Cardiac septum (tissue), 1 donor: ENCODE measurements at regions of chr13 and their contacts with region 1.

Region 1: DNA sequence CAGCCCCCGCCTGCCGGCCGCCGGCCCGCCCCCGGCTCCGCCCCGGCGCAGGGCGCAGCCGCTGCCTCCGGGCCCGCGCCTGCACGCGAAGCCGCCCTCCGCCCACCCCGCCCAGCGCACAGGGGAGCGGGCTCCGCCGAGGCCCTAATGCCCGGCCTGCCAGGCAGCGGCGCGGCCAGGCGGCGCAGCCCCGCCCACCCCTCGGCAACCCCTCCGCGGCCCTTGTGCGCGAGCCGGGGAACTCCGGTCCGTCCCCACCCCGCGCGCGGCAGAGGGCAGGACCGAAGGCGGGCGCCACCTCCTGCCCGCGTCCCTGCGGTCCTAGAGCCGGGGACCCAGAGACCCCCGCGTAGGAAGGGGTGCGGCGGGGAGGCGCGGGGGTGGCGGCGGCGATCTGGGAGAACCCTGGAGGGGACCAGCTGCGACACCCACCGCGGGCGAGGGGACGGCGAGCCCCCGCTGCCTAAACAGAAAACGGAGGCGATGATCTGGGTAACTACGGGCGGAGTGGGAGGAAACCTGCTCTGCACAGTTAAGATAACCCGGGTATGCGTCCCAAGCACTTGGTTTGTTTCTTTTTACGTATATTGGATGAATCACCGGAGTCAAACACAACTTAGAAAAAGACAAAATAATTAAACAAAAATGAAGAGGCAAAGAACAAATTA is 350 bp upstream of the USP12 start:
- DNase-seq: peak; percentile 94

Region 2: DNA sequence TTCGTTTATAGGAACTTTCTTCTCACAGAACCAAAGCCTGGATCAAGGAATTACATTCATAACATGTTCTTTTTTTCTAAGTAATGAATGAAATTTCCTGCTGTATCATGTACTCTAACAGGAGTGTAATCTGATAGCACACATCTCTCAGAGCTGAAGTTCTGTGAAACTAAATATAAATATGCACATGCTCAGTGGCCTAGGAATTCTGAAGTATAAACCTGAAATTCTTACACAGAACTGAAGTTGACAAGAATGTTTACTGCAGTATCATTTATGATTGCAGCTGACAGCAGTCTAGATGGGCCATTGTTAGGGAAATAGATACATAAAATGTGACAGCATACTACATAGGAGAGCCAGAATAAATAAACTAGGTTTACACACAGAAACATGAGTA is 54.8 kb before region 1 on chr13:
- intact Hi-C with region 1: loop called (anchors 10 kb)
- DNase-seq: no peak

Region 3: DNA sequence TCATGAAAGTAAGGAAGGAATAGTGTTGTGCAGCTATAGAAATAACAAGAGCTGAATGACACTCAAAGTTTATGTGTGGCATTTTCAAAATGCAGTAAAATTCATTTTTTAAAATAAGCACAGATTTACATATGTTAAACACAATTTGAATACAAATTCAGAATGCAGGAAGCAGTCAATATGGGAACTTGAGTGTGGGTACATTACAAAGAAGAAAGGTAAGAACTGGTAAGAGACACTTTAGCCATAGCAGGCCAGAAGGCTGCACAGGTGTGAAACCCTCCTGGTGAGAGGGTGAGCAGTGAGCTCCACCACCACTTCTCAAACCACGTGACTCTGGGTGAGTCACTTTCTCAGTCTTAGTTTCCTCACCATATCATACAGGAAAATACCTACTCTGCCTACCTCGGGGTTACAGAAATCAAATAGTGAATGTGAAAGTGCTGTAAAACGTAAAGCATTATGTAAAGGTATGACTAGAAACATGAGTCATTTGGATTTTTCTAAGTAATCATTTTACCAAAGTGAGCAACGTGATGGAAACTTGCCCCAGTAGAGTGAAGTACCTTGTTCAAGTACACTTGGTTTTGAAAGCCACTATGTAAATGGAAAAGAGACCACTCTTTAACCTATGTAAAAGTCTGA is 40.9 kb before region 1 on chr13:
- intact Hi-C with region 1: no loop called
- DNase-seq: no peak

Region 4: DNA sequence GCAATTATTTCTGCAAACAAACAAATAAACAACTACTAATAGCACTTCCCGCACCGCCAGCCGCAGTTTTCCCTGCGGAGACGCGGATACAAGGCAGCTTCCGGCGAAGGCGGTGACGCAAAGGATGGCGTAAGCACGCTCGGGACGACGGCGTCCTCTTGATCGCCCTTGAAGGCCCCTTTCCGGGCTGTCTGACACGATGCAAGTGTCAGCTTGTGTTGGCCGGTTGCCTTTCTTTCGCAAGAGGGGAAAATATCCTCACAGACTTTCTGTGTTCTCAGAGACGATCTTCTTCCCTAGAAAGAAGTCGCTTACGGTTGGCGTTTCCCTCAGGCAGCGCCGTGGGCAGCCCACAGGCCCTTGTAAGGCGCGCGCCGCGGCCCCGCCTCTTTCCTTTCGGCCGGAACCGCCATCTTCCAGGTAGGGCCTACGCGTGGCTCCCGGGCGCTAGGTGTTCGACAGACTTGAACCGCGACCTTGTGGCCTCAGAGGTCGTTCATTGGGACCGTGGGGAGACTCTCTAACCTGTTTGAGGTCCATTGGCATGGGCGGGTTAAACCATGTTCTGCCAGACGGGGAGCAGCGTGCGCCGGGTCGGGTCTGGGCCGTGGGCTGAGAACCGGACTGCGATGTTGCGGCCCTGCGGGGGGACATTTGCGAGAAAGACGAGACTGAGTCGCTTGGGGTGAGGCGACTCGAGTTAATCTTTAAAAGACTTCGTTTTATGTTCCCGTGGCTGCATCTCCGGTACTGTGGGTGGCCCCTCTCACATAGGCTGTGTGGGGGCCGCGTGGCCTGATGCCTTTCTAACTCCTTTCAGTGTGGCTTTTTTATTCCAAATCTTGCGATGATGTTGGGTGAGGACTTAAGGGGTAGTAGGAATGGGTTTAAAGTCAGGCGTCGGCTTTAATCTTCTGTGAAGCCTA is 79.5 kb after region 1 on chr13 and contains the start of gene RPL21:
- intact Hi-C with region 1: loop called (anchors 2 kb)
- DNase-seq: peak; percentile 97
- total RNA-seq, gene RPL21: 512 TPM

Region 5: GRCh38 chr13:27270594-27271520 is 98.9 kb after region 1 on chr13 and contains the start of gene RASL11A:
- intact Hi-C with region 1: loop called (anchors 5 kb)
- DNase-seq: peak; percentile 90
- total RNA-seq, gene RASL11A: 4.7 TPM

Region 6: DNA sequence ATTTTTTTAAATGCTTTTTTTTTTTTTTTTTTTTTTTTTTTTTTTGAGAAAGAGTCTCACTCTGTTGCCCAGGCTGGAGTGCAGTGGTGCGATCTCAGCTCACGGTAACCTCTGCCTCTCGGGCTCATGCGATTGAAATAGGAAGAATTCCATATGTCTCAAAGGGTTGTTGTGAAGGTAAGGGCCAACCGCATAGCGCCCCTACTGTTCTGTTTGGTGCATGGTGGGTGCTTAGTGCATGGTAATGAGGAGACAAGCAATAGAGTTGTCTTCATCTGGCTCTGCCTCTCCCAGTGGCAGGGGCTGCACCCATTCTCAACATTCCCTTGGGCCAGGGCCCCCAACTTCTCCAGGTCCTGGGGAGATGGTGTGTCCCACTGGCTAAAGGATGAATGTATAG is 167.3 kb after region 1 on chr13:
- intact Hi-C with region 1: no loop called
- DNase-seq: no peak

Region 7: DNA sequence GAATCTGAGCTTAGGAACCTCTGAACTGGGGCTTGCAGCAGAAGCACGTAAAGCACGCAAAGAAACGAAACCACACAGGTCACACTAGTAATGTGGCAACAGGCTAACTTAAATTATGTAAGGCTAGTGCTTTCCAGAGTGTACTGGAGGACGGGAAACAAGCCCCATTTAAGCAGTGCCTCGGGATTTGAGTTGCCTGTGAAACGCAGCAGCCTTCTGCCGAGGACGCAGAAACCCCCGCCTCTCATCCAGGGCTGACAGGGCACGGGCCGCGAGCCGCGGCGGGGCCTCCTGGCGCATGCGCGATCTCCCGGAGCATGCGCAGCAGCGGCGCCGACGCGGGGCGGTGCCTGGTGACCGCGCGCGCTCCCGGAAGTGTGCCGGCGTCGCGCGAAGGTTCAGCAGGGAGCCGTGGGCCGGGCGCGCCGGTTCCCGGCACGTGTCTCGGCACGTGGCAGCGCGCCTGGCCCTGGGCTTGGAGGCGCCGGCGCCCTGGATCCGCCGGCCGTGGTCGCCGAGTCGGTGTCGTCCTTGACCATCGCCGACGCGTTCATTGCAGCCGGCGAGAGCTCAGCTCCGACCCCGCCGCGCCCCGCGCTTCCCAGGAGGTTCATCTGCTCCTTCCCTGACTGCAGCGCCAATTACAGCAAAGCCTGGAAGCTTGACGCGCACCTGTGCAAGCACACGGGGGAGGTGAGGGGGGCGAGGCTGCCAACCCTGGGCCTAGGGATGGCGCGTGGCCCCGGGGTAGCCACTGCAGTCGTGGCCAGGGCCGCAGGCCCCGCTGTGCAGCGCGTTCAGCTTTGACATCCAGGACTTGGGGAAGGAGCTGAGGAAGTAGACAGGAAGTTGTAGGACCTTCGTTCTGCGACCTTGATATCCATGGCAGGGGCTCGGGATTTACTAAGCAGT is 252.5 kb after region 1 on chr13 and contains the start of gene GTF3A:
- intact Hi-C with region 1: loop called (anchors 10 kb)
- DNase-seq: peak; percentile 93
- total RNA-seq, gene GTF3A: 167 TPM